Sigmoid colon (tissue), 7 donors: ENCODE measurements at regions of chr12 and their contacts with region 1.

Region 1: GRCh38 chr12:124388679-124389536 is 94.0 kb downstream of the RFLNA start:
- DNase-seq: peak; percentile 96
- H3K4me3 ChIP-seq: peak overlapping the region; percentile 28 to 61 (median 57)
- H3K27ac ChIP-seq: peak overlapping the region; percentile 94 to 99 (median 96)
- H3K4me1 ChIP-seq: peaks cover 0 to 98% (median 94%) of the 10 kb centered on the region in 4 donors
- H3K27me3 ChIP-seq: no peaks in the 10 kb centered on the region
- CTCF ChIP-seq: no peak
- EP300 ChIP-seq: peak in 1 of 4 donors; percentile 50
- POLR2A ChIP-seq: peak; percentile 57 to 69

Region 2: GRCh38 chr12:124311292-124312109 is 77.4 kb before region 1 on chr12:
- intact Hi-C with region 1: no loop called
- DNase-seq: no peak
- H3K4me3 ChIP-seq: no peak overlapping the region
- H3K27ac ChIP-seq: no peak overlapping the region
- H3K4me1 ChIP-seq: no peaks in the 10 kb centered on the region
- H3K27me3 ChIP-seq: no peaks in the 10 kb centered on the region
- CTCF ChIP-seq: no peak
- EP300 ChIP-seq: no peak
- POLR2A ChIP-seq: no peak

Region 3: DNA sequence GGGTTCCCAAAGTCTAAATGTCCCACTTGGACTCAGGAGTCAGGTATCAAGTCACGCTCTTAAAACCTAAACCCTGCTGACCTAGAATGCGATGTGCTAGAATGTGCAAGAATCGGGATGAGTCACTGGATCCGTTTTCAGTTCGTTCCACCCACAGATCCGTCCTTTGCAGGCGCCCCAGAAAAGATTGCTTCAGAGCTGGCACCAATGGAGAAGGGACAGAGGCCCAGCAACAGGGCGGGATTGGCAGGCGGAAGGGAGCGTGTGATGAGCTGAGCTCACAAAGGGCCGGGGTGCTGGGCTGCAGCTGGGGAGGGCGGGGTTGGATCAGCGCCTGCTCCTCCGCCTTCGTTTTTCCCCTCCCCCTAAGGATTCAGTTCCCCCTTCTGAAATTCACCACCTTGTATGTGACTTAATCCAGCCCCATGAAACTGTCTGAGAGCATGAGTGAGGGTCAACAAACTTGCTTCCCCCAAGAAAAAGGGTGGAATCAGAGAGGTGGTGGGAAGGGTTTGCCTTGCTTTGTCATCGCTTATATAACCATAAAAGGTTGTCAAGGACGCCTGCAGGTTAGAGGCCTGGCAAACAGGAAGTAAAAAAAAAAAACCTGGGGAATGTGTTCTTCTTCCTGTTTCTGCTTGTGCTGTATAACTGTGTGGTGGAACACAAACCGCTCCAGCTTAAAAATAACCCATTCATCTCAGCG is 528.4 kb after region 1 on chr12:
- intact Hi-C with region 1: loop called (anchors 10 kb)
- DNase-seq: peak; percentile 100
- H3K4me3 ChIP-seq: peak overlapping the region; percentile 17 to 95 (median 63)
- H3K27ac ChIP-seq: peak overlapping the region; percentile 93 to 100 (median 98)
- H3K4me1 ChIP-seq: peaks cover 5 to 61% (median 49%) of the 10 kb centered on the region in 4 donors
- H3K27me3 ChIP-seq: no peaks in the 10 kb centered on the region
- CTCF ChIP-seq: no peak
- EP300 ChIP-seq: peak; percentile 53 to 99 (median 80)
- POLR2A ChIP-seq: peak; percentile 12 to 28